CD14-positive monocyte (primary cell): ENCODE measurements at regions of chr3 and their contacts with region 1.

Region 1: DNA sequence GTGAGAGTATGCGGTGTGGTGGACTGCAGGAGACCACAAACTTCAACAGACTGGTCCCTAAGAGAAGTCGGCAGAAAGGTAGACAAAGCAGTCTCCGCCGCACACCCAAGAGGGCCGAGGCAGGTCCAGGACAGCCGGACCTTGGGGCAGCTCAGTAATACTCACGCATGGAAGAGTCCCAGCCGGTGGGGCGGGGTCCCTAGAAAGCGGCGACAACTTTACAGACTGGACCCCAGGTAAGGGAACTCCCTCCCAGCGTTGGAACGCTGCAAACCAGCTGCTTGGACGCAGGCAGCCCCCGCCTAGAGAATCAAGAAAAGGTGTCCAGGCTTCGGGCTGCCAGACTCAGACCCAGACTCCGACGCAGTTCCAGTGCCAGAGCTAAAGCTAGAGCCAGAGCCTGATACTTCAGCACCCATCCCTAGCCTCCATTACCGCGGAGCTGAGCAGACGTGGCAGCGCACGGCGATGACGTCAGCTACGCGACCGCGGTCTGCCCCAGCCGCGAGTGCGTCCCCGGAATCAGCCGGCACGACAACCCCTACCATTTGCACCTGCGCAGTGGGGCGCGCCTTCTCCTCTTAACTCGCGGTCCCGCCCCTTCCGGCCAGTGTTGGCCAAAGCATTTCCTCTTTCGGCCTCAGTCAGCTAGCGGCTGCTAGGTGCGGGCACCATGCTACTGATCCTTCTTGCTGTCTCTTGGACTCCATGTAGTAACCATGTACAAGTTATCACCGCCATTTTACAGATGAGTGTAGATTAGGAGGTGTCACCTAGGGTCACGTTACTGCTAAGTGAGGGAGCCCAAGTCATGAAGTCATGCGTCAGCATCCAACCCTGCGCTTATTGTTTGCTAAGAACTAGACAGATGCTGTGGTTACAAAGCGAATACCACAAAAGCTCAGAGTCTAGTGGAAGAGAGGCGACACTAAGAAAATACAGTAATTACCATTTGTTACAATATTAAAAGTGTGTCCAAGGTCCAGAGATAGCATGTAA is at the start of gene TMEM39A:
- DNase-seq: peak; percentile 100
- H3K4me3 ChIP-seq: peak within 1 kb of the TSS; percentile 84 to 88 (median 88)
- H3K4me3 Mint-ChIP-seq: peak within 1 kb of the TSS; percentile 95 to 98
- H3K27ac ChIP-seq: peak within 1 kb of the TSS; percentile 82 to 96
- H3K27ac Mint-ChIP-seq: peak within 1 kb of the TSS; percentile 95 to 99 (median 98)
- H3K4me1 ChIP-seq: peaks cover 33 to 42% of the 10 kb centered on the region in 2 donors
- H3K4me1 Mint-ChIP-seq: peaks cover 45% of the 10 kb centered on the region
- H3K27me3 ChIP-seq: no peaks in the 10 kb centered on the region
- H3K27me3 Mint-ChIP-seq: peaks cover 0 to 1% (median 1%) of the 10 kb centered on the region in 3 donors
- CTCF ChIP-seq: no peak
- polyA plus RNA-seq, gene TMEM39A: 9.6 to 12.2 (median 11.6) TPM

Region 2: DNA sequence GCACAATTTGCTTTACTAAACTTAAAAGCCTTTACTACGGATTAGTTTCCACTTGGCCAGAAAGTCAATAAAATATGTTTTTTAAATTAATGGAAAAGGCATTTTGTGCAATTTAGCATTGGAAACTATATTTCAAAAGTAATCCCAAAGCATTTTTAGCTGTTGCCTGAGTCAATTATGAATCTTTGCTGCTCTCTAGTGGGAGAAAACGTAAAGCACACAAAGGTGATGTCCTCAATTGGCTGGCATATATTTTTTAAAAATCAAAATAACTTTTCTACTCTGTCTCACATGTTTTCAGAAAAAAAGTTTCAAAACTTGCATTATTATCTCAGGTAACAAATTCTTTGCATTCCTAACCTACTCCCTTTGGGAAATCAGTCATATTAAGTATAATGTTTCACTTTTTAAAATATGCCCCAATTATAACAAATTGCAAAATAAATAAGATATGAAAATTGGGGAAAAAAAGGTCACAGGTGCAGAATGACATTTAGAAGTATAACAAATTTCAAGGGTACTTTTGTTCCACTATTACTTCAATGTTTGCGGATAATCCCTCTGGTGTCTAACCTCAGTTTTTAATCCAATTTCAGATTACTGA is 364.7 kb before region 1 on chr3:
- intact Hi-C with region 1: no loop called
- DNase-seq: no peak
- H3K4me3 ChIP-seq: no peak overlapping the region
- H3K4me3 Mint-ChIP-seq: no peak overlapping the region
- H3K27ac ChIP-seq: no peak overlapping the region
- H3K27ac Mint-ChIP-seq: no peak overlapping the region
- H3K4me1 ChIP-seq: no peaks in the 10 kb centered on the region
- H3K4me1 Mint-ChIP-seq: no peaks in the 10 kb centered on the region
- H3K27me3 ChIP-seq: no peaks in the 10 kb centered on the region
- H3K27me3 Mint-ChIP-seq: peaks cover 0 to 3% (median 3%) of the 10 kb centered on the region in 3 donors
- CTCF ChIP-seq: peak; percentile 40

Region 3: DNA sequence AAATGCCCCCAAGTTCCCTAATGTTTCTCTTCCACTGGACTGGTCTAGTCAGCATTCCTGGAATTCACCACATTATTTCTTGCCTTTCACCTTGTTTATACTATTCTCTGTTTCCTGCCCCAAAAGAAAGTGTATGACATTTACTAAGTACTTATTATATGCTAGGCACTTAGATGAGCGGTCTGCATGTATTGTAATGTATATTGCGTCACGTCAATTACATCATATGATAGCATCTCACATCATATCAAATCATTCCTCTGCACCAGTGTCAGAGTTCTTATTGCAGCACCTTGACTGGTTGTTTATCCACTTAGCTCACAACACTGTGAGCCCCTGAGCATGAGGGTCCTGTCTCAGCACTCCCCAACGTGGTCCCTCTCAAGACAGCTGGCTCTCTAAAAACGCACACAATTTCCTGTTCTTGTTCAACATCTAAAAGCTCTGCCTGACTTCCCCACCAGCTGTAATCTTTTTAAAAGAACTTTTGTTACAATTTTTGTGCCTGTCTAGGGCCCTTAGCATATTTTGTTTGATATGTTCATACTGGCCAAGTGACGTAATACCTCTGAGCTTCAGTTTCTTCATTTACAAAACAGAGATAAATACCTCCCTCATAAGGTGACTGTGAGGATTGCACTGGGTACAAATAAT is 110.5 kb before region 1 on chr3:
- intact Hi-C with region 1: loop called in 1 of 2 experiments (anchors 10 kb)
- DNase-seq: peak; percentile 73 to 87 (median 81)
- H3K4me3 ChIP-seq: no peak overlapping the region
- H3K4me3 Mint-ChIP-seq: peak overlapping the region in 1 of 2 donors; percentile 51
- H3K27ac ChIP-seq: peak overlapping the region; percentile 34 to 80
- H3K27ac Mint-ChIP-seq: peak overlapping the region; percentile 86 to 97 (median 92)
- H3K4me1 ChIP-seq: peaks cover 25 to 29% of the 10 kb centered on the region in 2 donors
- H3K4me1 Mint-ChIP-seq: peaks cover 44% of the 10 kb centered on the region
- H3K27me3 ChIP-seq: no peaks in the 10 kb centered on the region
- H3K27me3 Mint-ChIP-seq: peaks cover 0 to 5% (median 0%) of the 10 kb centered on the region in 3 donors
- CTCF ChIP-seq: peak; percentile 58

Region 4: DNA sequence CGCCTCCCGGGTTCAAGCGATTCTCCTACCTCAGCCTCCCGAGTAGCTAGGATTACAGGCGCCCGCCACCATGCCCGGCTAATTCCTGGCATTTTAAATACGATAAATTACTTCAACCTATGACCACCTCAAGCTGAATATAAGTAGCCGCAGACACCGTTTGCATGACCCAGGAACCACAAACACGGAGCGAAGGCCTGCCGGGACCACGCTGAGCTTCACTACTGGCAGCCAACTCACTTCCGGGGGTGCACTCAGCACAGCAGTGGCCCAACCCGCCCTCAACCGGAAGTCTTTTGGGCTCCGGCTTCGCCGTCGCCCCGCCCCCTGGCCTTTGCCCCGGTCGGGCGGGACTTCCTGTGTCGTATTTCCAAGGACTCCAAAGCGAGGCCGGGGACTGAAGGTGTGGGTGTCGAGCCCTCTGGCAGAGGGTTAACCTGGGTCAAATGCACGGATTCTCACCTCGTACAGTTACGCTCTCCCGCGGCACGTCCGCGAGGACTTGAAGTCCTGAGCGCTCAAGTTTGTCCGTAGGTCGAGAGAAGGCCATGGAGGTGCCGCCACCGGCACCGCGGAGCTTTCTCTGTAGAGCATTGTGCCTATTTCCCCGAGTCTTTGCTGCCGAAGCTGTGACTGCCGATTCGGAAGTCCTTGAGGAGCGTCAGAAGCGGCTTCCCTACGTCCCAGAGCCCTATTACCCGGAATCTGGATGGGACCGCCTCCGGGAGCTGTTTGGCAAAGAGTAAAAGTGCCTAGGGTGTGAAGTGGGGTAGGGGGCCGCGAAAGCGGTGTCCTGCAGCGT is 34.9 kb after region 1 on chr3 and contains the start of gene TIMMDC1:
- intact Hi-C with region 1: loop called (anchors 2 to 5 kb)
- DNase-seq: peak; percentile 95 to 98 (median 96)
- H3K4me3 ChIP-seq: peak within 1 kb of the TSS; percentile 62 to 95 (median 88)
- H3K4me3 Mint-ChIP-seq: peak within 1 kb of the TSS; percentile 96 to 99
- H3K27ac ChIP-seq: peak within 1 kb of the TSS; percentile 81 to 99
- H3K27ac Mint-ChIP-seq: peak within 1 kb of the TSS; percentile 96 to 99 (median 98)
- H3K4me1 ChIP-seq: peaks cover 17 to 19% of the 10 kb centered on the region in 2 donors
- H3K4me1 Mint-ChIP-seq: peaks cover 32% of the 10 kb centered on the region
- H3K27me3 ChIP-seq: no peaks in the 10 kb centered on the region
- H3K27me3 Mint-ChIP-seq: peaks cover 2 to 3% (median 2%) of the 10 kb centered on the region in 3 donors
- CTCF ChIP-seq: no peak
- polyA plus RNA-seq, gene TIMMDC1: 34.1 to 81.1 (median 78.2) TPM

Region 5: DNA sequence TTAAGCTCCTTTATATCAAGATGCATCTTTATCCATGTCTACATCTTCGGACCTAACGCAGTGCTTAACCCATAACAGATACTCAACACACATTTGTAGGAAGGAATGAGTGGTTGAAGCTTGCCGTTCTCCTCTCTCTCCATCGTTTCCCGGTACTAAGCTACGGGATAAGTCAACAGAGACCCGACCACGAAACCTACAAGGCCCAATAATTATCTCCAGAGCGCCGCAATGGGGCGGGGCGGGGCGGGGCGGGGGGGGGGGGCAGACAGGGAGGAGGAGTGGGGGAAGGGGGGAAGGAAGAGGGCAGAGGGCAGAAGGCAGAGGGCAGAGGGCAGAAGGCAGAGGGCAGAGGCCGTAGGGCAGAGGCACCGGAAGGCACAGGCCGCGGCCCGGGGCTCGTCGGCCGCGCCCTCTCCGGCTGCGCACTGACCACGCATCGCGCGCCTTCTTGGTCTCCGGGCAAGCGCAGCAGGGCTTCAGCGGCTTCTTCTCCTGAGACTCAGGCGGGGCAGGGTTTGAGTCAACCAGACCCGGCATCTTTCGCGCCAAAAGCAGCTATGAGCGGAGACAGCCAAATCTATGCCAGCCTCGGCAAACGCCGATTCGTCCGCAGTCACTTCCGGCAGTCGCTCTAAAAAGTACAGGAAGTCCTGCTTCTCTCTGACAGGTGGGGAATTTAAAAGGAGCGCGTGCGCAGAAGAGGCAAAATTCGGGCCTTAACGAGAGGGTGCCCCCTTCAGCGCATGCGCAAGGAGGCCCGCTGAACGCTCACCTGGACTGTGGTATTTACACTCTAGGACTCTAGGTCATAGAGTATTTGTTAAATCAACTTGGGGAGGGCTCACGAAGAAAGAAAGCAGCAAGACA is 213.5 kb after region 1 on chr3 and contains the start of gene COX17:
- intact Hi-C with region 1: loop called in 1 of 2 experiments (anchors 10 kb)
- DNase-seq: peak; percentile 95 to 97 (median 95)
- H3K4me3 ChIP-seq: peak within 1 kb of the TSS; percentile 81 to 97 (median 89)
- H3K4me3 Mint-ChIP-seq: peak within 1 kb of the TSS; percentile 83 to 99
- H3K27ac ChIP-seq: peak within 1 kb of the TSS; percentile 94 to 98
- H3K27ac Mint-ChIP-seq: peak within 1 kb of the TSS; percentile 97 to 100 (median 99)
- H3K4me1 ChIP-seq: peaks cover 9 to 20% of the 10 kb centered on the region in 2 donors
- H3K4me1 Mint-ChIP-seq: peaks cover 18% of the 10 kb centered on the region
- H3K27me3 ChIP-seq: no peaks in the 10 kb centered on the region
- H3K27me3 Mint-ChIP-seq: no peaks in the 10 kb centered on the region
- CTCF ChIP-seq: no peak
- polyA plus RNA-seq, gene COX17: 23.0 to 83.6 (median 81.6) TPM

Region 6: DNA sequence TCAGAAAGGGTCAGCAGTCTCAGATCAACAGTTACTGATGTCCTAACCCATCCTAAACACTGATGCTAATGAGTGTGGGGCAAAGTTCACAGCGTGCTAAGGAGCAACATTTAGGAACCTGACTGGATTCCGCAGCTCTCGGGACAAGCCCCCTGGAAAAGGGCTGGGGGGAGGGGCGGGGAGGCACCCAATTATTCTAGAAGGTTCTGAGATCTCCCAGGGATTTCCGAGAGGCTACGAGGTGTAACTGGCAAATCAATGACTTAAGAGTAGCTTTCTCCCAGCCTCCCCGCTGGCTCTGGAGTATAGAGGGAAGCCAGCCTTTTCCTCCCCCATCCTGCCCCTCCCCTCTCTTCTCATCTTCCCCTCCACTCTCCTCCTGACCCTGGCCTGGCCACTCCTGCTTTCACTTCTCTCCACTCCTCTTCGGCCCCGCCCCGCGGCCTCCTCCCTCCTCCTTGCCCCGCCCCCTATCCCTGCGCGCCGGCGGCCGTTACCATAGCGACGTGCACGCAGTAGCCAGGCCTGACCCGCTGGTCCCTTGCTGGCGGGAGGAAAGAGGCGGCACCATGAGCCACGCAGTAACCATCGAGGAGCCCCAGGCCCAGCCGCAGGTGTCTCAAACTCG is 239.2 kb after region 1 on chr3 and contains the start of gene CFAP91:
- intact Hi-C with region 1: loop called in 1 of 2 experiments (anchors 5 kb)
- DNase-seq: peak; percentile 94 to 98 (median 97)
- H3K4me3 ChIP-seq: peak within 1 kb of the TSS; percentile 15 to 70 (median 35)
- H3K4me3 Mint-ChIP-seq: peak within 1 kb of the TSS; percentile 66 to 82
- H3K27ac ChIP-seq: peak within 1 kb of the TSS; percentile 38 to 70
- H3K27ac Mint-ChIP-seq: peak within 1 kb of the TSS in 6 of 7 donors; percentile 26 to 88 (median 84)
- H3K4me1 ChIP-seq: peaks cover 32 to 34% of the 10 kb centered on the region in 2 donors
- H3K4me1 Mint-ChIP-seq: peaks cover 28% of the 10 kb centered on the region
- H3K27me3 ChIP-seq: peaks cover 4 to 6% of the 10 kb centered on the region in 2 donors
- H3K27me3 Mint-ChIP-seq: peaks cover 2 to 18% (median 6%) of the 10 kb centered on the region in 3 donors
- CTCF ChIP-seq: no peak
- polyA plus RNA-seq, gene CFAP91: 0.14 TPM in 1 of 3 donors, not detected in the others

Region 7: GRCh38 chr3:119885746-119886530 is 422.5 kb after region 1 on chr3:
- intact Hi-C with region 1: no loop called
- DNase-seq: no peak
- H3K4me3 ChIP-seq: no peak overlapping the region
- H3K4me3 Mint-ChIP-seq: no peak overlapping the region
- H3K27ac ChIP-seq: no peak overlapping the region
- H3K27ac Mint-ChIP-seq: no peak overlapping the region
- H3K4me1 ChIP-seq: no peaks in the 10 kb centered on the region
- H3K4me1 Mint-ChIP-seq: no peaks in the 10 kb centered on the region
- H3K27me3 ChIP-seq: no peaks in the 10 kb centered on the region
- H3K27me3 Mint-ChIP-seq: no peaks in the 10 kb centered on the region
- CTCF ChIP-seq: no peak

Region 8: DNA sequence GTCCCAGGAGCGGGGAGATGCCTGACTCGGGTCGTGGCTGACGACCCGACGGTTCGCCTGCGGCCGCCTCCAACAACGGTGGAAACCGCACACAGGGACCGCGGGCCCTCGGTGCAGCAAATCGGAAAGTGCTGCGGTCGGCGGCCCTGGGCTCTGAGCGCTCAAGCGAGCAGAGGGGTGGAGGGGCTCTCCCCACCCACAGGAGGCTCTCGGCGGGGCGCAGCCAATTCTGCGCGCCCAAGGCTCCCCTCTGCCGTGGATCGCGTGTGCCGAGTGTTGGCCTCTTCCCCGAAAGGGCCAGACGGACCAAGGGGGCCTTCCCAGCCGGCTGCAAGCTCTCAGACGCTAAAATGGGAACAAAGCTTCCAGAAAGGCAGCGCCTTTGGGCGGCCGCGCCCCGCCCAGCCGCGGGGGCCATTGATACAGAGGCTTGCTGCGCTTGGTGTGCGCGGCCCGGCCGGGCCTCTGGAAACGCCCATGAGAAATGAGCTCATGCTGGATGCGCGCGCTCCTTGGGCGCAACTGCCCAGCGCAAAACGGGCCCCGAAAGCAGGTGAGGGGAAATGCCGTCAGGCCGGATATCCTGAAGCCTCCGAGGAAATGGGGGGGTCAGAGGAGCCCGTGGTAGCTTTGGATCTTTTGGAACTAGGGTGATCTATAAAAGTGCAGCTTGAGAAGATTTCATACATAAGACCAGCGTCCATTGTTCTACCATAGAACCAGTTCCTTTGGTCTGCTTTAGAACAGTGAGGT is 631.9 kb after region 1 on chr3:
- intact Hi-C with region 1: loop called in 1 of 2 experiments (anchors 10 kb)
- DNase-seq: peak; percentile 77 to 86 (median 83)
- H3K4me3 ChIP-seq: peak overlapping the region; percentile 86 to 99 (median 94)
- H3K4me3 Mint-ChIP-seq: peak overlapping the region in 1 of 2 donors; percentile 98
- H3K27ac ChIP-seq: peak overlapping the region; percentile 96 to 100
- H3K27ac Mint-ChIP-seq: no peak overlapping the region
- H3K4me1 ChIP-seq: peaks cover 20 to 39% of the 10 kb centered on the region in 2 donors
- H3K4me1 Mint-ChIP-seq: peaks cover 17% of the 10 kb centered on the region
- H3K27me3 ChIP-seq: no peaks in the 10 kb centered on the region
- H3K27me3 Mint-ChIP-seq: no peaks in the 10 kb centered on the region
- CTCF ChIP-seq: no peak